BJ (cell line): ENCODE measurements at regions of chr6 and their contacts with region 1.

Region 1: DNA sequence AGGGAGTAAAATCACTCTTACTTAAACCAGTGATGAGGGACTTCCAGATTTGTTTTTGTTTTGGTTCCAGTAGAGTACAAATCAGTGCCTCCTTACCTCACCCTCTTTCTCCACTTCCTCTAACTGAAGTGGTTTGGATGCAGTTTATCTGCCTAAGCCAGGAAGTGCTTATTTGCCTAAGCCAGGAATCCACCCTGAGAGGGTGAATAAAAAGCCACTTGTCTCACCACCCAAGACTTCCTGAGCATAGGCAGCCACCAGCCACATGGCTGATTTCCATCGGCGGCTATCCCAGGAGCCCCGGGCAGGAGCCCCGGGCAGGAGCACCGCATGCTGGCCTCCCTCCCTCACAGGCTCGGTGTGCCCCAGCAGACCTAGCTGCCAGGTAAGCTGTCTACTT is 12.0 kb downstream of the LRP11 start:
- DNase-seq: no peak
- H3K4me3 ChIP-seq: no peak overlapping the region
- H3K27me3 ChIP-seq: no peaks in the 10 kb centered on the region
- CTCF ChIP-seq: no peak

Region 2: DNA sequence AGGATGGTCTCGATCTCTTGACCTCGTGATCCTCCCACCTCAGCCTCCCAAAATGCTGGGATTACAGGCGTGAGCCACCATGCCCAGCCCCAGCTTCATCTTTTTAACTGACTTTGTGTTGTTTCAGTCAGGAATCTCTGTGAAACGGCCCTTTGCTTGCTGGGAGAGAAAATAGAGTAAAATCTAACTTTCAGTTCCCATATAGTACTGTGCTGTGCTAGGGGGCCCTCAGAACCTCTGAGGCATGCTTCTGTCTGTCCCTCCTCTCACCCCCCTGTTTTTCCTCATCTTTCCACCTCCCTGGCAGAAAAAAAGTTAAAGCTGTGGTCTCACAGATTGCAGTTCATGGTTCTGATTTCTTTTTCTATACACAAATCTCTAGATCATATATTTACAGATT is 36.4 kb before region 1 on chr6:
- CTCF ChIA-PET with region 1: interaction called, 3 read pairs
- POLR2A ChIA-PET with region 1: interaction called, 16 read pairs
- DNase-seq: no peak
- H3K4me3 ChIP-seq: no peak overlapping the region
- H3K27me3 ChIP-seq: no peaks in the 10 kb centered on the region
- CTCF ChIP-seq: no peak

Region 3: DNA sequence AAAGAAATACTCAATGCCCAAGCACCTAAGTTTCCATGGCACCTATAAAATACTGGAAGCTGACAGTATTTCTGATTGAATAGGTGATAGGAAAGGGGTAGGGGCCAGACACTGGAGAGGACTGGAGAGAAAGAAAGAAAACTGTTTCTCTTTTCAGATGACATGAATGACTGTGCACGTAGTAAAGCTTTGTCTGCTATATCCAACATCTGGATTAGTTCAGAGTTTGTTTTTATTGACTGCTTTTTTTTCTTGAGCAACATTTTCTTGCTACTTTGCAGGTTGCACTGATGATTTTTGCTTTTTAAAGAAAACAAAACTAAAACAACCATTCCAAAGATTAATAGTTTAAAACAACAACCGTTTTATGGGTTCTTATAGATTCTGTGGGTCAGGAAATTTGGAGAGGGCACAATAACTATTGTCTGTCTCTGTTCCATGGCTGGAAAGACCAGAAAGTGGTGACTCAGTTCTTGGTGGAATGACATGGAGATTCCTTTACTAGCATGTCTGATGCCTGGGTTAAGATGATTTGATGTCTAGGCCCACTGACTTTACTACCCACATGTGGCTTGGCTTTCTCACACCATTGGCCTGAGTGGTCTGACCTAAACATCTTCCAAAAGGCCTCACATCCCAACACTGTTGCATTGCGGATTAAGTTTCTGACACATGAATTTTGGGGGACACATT is 24.2 kb after region 1 on chr6:
- CTCF ChIA-PET with region 1: no interaction called
- POLR2A ChIA-PET with region 1: no interaction called
- DNase-seq: no peak
- H3K4me3 ChIP-seq: no peak overlapping the region
- H3K27me3 ChIP-seq: peaks cover 6% of the 10 kb centered on the region
- CTCF ChIP-seq: no peak